Heart left ventricle (tissue), 16 donors: ENCODE measurements at regions of chr2 and their contacts with region 1.

Region 1: GRCh38 chr2:60794277-60794863 is 38.3 kb downstream of the PAPOLG start:
- DNase-seq: no peak
- ATAC-seq: no peak
- H3K4me3 ChIP-seq: no peak overlapping the region
- H3K27ac ChIP-seq: no peak overlapping the region
- H3K4me1 ChIP-seq: peaks cover 0 to 31% (median 0%) of the 10 kb centered on the region in 12 donors
- H3K27me3 ChIP-seq: no peaks in the 10 kb centered on the region
- CTCF ChIP-seq: peak in 11 of 12 donors; percentile 14 to 57 (median 49)
- POLR2A ChIP-seq: no peak

Region 2: DNA sequence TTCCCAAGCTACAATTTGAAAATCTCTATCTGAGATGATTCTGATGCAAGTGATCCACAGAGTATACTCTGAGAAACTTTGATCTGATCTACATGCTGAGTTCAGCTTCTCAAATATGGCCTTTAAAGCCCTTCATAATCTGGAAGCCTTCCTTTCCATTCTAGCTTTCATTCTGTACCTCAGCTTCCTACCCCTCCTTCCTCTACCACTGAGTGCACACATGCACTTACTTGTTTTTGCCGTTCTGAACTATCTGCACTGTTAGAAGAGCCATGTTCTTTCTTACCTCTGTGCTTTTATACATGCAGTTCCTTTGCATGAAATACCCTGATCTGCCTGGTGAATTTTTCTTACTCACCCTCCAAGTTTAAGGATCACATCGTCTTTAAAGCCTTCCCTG is 112.0 kb after region 1 on chr2:
- intact Hi-C with region 1: loop called in 1 of 10 experiments (anchors 10 kb)
- DNase-seq: no peak
- ATAC-seq: no peak
- H3K4me3 ChIP-seq: no peak overlapping the region
- H3K27ac ChIP-seq: no peak overlapping the region
- H3K4me1 ChIP-seq: no peaks in the 10 kb centered on the region
- H3K27me3 ChIP-seq: no peaks in the 10 kb centered on the region
- CTCF ChIP-seq: no peak
- POLR2A ChIP-seq: no peak